ENCODE measurements at regions of chr2 and their contacts with region 1.

Region 1: GRCh38 chr2:223797811-223798721 is 39.3 kb downstream of the AP1S3 start:
- DNase-seq: no peak
- ATAC-seq: peak; percentile 64
- H3K4me3 ChIP-seq: no peak overlapping the region
- H3K27ac ChIP-seq: peak overlapping the region; percentile 72
- H3K4me1 ChIP-seq: peaks cover 52% of the 10 kb centered on the region
- H3K27me3 ChIP-seq: no peaks in the 10 kb centered on the region
- CTCF ChIP-seq: peak; percentile 73; the same call in 1 of the 2 replicates

Region 2: DNA sequence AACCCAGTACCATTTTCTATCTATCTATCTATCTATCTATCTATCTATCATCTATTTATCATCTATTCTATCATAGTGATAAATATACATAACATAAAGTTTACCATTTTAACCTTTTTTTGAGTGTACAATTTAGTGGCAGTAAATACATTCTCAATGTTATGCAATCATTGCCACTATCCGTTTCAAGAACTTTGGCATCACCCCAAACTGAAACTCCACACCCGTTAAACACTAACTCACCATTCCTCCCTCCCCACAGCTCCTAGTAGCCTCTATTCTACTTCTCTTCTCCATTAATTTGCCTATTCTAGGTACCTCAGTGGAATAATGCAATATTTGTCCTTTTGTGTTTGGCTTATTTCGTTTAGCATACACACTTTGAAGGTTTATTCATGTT is 828.6 kb before region 1 on chr2:
- CTCF ChIA-PET with region 1: interaction called, 12 read pairs
- POLR2A ChIA-PET with region 1: no interaction called
- in situ Hi-C with region 1: no loop called
- intact Hi-C with region 1: loop called (anchors 2 kb)
- DNase-seq: no peak
- ATAC-seq: no peak
- H3K4me3 ChIP-seq: no peak overlapping the region
- H3K27ac ChIP-seq: no peak overlapping the region
- H3K4me1 ChIP-seq: no peaks in the 10 kb centered on the region
- H3K27me3 ChIP-seq: no peaks in the 10 kb centered on the region
- CTCF ChIP-seq: no peak

Region 3: GRCh38 chr2:223692191-223692947 is 105.7 kb before region 1 on chr2:
- CTCF ChIA-PET with region 1: no interaction called
- POLR2A ChIA-PET with region 1: no interaction called
- in situ Hi-C with region 1: no loop called
- intact Hi-C with region 1: no loop called
- DNase-seq: no peak
- ATAC-seq: peak; percentile 97
- H3K4me3 ChIP-seq: no peak overlapping the region
- H3K27ac ChIP-seq: no peak overlapping the region
- H3K4me1 ChIP-seq: no peaks in the 10 kb centered on the region; the same call in 1 of the 2 replicates
- H3K27me3 ChIP-seq: no peaks in the 10 kb centered on the region
- CTCF ChIP-seq: peak; percentile 89

Region 4: DNA sequence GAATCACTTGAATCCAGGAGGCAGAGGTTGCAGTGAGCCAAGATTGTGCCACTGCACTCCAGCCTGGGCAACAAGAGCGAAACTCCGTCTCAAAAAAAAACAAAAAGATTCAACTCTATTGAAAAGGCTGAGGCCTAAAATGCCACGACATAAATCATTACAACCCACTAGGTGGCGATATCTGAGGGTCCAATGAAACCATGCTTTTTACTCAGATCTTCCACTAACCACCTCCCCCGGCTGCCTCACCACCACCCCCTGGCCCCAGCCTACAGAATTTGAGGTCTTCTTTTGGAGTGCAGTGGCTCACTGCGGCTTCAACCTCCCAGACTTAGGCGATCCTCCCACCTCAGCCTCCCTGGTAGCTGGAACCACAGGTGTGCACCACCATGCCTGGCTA is 18.2 kb before region 1 on chr2:
- CTCF ChIA-PET with region 1: interaction called, 13 read pairs
- POLR2A ChIA-PET with region 1: no interaction called
- in situ Hi-C with region 1: no loop called
- intact Hi-C with region 1: no loop called
- DNase-seq: no peak
- ATAC-seq: peak; percentile 70
- H3K4me3 ChIP-seq: no peak overlapping the region
- H3K27ac ChIP-seq: no peak overlapping the region
- H3K4me1 ChIP-seq: peaks cover 3% of the 10 kb centered on the region; the same call in 1 of the 2 replicates
- H3K27me3 ChIP-seq: no peaks in the 10 kb centered on the region
- CTCF ChIP-seq: peak; percentile 62